Calu3 (cell line): ENCODE measurements at regions of chr7 and their contacts with region 1.

Region 1: DNA sequence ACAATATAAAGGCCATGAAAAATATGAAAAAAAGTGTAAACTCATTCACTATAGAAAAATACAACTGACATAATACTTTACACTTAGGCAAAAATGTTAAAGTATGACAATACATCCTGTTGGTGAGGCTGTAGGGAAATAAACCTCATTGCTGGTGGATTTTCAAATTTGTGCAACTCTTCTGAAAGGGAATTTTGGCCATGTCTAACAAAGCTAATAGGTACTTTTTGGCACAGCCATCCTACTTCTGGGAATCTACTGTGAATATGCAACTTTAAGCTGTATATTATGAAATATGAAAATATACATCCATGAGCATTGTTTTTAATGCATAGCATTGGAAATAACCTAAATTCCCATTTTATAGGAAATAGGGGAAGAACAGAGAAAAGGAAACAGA is 13.4 kb upstream of the COA1 start:
- DNase-seq: no peak
- H3K4me3 Mint-ChIP-seq: no peak overlapping the region
- H3K27ac Mint-ChIP-seq: no peak overlapping the region
- H3K4me1 Mint-ChIP-seq: no peaks in the 10 kb centered on the region
- H3K27me3 Mint-ChIP-seq: peaks cover 7% of the 10 kb centered on the region
- CTCF ChIP-seq: no peak

Region 2: DNA sequence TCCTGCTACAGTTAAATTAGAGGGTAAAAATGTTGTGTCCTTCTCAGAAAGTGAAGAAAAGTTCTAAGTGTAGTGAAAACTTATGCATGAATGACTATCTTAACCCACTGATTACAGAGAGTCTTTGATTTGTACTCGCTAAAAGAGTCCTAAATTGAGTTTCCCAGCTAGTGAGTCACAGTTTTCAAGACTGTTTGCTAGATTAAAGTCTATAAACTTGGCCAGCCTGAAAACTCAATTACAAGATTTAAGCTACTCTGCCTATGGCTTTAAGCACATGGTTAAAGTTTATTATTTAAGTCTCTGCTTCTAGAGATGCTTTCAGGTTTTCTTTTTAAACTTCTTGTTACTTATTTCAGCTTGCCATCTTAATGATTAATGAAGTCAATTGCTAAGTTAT is 82.3 kb after region 1 on chr7:
- CTCF ChIA-PET with region 1: no interaction called
- intact Hi-C with region 1: loop called (anchors 5 kb)
- DNase-seq: no peak
- H3K4me3 Mint-ChIP-seq: peak overlapping the region; percentile 58
- H3K27ac Mint-ChIP-seq: no peak overlapping the region
- H3K4me1 Mint-ChIP-seq: peaks cover 29% of the 10 kb centered on the region
- H3K27me3 Mint-ChIP-seq: no peaks in the 10 kb centered on the region
- CTCF ChIP-seq: no peak

Region 3: GRCh38 chr7:44044315-44045225 is 301.9 kb after region 1 on chr7 and contains the start of gene DBNL:
- CTCF ChIA-PET with region 1: no interaction called
- intact Hi-C with region 1: no loop called
- DNase-seq: peak; percentile 100
- H3K4me3 Mint-ChIP-seq: peak within 1 kb of the TSS; percentile 84
- H3K27ac Mint-ChIP-seq: peak within 1 kb of the TSS; percentile 57
- H3K4me1 Mint-ChIP-seq: peaks cover 59% of the 10 kb centered on the region
- H3K27me3 Mint-ChIP-seq: no peaks in the 10 kb centered on the region
- CTCF ChIP-seq: no peak
- total RNA-seq, gene DBNL: 164 and 180 TPM in 2 replicates